ENCODE measurements at regions of chr2 and their contacts with region 1.

Region 1: DNA sequence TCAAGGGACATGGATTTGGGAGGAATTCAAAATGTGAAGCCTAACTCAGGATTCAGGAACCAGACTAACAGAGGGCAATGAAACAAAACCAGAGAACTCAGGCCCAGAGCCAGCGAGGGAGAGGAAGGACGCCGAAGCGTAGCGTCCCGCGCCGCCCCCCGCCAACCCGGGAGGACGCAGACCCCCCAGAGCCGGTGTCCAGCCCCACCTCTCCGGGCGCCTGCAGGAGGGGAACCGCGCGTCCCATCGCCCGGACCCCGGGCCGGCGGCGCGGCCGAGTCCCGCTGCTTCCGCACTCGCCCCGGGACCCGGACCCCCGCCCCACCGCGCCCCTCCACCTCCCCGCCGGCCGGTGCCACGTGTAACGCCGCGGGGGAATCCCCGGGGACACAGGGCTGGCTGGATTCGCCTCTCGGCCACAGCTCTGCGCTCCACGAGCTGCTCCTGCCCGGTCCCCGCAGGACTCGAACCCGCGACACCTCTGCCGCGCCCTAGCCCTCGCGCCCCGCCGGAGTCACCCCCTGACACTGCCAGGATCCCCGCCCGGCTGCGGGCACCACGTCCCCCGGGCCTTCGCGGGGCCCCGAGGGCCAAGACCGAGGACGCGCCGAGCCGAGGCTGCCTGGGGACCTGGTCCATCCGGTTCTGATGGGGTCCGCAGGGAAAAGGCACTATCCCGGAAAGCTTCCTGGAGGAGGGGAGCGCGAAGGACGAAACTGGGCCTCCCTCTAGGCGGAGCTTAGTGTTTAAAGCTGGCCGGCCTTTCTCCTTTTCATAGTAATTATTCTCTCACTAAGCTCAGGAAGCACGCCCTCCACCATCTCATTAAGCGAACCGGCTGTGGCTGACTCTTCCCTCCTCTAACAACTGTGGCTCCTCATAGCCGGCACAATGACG is 40.4 kb upstream of the FAM124B start:
- DNase-seq: peak; percentile 27
- ATAC-seq: peak; percentile 78
- H3K4me3 Mint-ChIP-seq: peak overlapping the region; percentile 83
- H3K27ac Mint-ChIP-seq: peak overlapping the region; percentile 37
- H3K4me1 Mint-ChIP-seq: peaks cover 12% of the 10 kb centered on the region
- H3K27me3 Mint-ChIP-seq: peaks cover 23% of the 10 kb centered on the region
- CTCF ChIP-seq: no peak

Region 2: DNA sequence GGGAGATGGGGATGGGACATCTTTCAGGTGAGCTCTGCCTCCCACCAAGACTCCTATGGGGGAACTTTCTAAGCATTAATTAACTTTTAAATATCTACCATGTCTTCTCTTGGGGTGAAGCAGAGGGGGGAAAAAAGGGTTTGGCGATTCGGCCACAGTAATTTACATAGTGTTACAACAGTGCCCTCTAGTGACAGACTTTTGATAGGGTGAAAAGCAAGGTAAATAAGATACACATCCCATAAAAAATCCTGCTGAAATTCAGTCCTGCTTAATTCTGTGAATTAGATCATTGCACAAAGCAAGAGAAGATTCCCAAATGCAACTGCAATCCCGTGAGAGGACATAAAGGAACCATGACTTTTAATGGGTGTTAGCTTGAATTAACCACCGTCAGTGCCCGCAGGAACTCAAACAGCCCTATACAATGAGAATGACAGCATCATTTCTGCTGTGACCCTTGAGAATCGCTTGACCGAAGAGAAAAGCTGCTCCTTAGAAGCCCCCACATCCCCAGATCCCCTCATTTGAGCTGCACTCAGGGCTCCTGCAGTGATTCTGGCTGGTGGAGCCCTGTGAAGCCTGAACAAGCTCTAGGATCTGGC is 73.2 kb before region 1 on chr2:
- CTCF ChIA-PET with region 1: no interaction called
- POLR2A ChIA-PET with region 1: no interaction called
- intact Hi-C with region 1: loop called (anchors 5 kb)
- DNase-seq: no peak
- ATAC-seq: no peak
- H3K4me3 Mint-ChIP-seq: no peak overlapping the region
- H3K27ac Mint-ChIP-seq: no peak overlapping the region
- H3K4me1 Mint-ChIP-seq: no peaks in the 10 kb centered on the region
- H3K27me3 Mint-ChIP-seq: no peaks in the 10 kb centered on the region
- CTCF ChIP-seq: peak; percentile 48

Region 3: GRCh38 chr2:224401641-224402342 is 40.5 kb before region 1 on chr2 and contains the start of gene FAM124B:
- CTCF ChIA-PET with region 1: no interaction called
- POLR2A ChIA-PET with region 1: no interaction called
- intact Hi-C with region 1: no loop called
- DNase-seq: peak; percentile 21
- ATAC-seq: peak; percentile 49
- H3K4me3 Mint-ChIP-seq: peak within 1 kb of the TSS; percentile 68
- H3K27ac Mint-ChIP-seq: no peak within 1 kb of the TSS
- H3K4me1 Mint-ChIP-seq: peaks cover 14% of the 10 kb centered on the region
- H3K27me3 Mint-ChIP-seq: peaks cover 2% of the 10 kb centered on the region
- CTCF ChIP-seq: no peak
- total RNA-seq, gene FAM124B: 0.29 TPM in 1 of 2 replicates, not detected in the other

Region 4: GRCh38 chr2:224613543-224614286 is 171.4 kb after region 1 on chr2:
- CTCF ChIA-PET with region 1: no interaction called
- POLR2A ChIA-PET with region 1: no interaction called
- intact Hi-C with region 1: no loop called
- DNase-seq: no peak
- ATAC-seq: no peak
- H3K4me3 Mint-ChIP-seq: no peak overlapping the region
- H3K27ac Mint-ChIP-seq: no peak overlapping the region
- H3K4me1 Mint-ChIP-seq: no peaks in the 10 kb centered on the region
- H3K27me3 Mint-ChIP-seq: no peaks in the 10 kb centered on the region
- CTCF ChIP-seq: no peak

Region 5: DNA sequence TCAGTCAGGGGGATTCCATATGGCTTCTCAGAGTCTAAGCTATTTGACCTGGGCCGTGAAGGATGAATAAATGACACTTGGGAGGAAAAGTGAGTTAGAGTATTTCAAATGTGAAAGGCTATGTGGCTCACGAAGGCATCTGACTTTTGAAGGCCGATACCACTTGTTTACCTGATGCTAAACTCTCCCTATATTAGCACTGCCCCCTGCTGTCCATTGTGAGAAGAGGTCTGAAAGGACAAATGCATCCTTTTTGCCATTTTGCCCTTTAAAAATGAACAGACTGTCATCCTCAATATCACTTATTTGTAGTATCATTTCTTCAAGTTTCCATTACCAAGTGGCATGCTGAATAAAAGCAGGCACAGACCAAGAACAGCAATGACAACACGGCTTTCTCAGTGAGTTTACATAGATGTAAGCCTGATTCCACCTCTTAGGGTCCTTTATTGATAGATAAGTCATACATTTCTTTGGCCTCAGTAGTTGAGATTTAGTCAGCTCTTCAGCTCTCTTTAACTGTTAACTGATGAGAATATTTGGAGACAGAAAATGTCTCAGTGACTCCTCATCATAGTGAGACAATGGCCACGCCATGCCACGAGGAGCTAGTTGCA is 559.8 kb after region 1 on chr2:
- CTCF ChIA-PET with region 1: no interaction called
- POLR2A ChIA-PET with region 1: no interaction called
- intact Hi-C with region 1: no loop called
- DNase-seq: no peak
- ATAC-seq: peak; percentile 68
- H3K4me3 Mint-ChIP-seq: peak overlapping the region; percentile 53
- H3K27ac Mint-ChIP-seq: peak overlapping the region; percentile 79
- H3K4me1 Mint-ChIP-seq: peaks cover 34% of the 10 kb centered on the region
- H3K27me3 Mint-ChIP-seq: no peaks in the 10 kb centered on the region
- CTCF ChIP-seq: no peak

Region 6: DNA sequence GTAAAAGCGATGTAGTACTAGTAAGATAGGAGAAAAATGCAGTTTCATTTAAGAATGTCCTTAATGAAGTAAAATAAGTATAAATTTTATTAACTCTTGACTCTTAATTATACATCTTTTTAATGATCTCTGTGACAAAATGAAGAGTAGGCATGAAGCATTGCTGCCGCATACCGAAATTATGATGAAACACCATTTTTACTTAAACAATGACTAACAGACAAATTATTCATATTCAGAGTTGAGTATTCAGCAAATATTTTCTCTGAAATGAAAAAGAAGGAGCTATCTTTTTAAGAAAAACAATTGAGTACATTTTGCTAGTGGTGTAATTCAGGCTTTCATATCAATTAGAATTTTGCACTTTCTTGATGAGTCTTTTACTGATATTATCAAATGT is 750.5 kb after region 1 on chr2:
- CTCF ChIA-PET with region 1: no interaction called
- POLR2A ChIA-PET with region 1: no interaction called
- intact Hi-C with region 1: no loop called
- DNase-seq: no peak
- ATAC-seq: no peak
- H3K4me3 Mint-ChIP-seq: no peak overlapping the region
- H3K27ac Mint-ChIP-seq: no peak overlapping the region
- H3K4me1 Mint-ChIP-seq: no peaks in the 10 kb centered on the region
- H3K27me3 Mint-ChIP-seq: peaks cover 5% of the 10 kb centered on the region
- CTCF ChIP-seq: no peak